Heart left ventricle (tissue), 16 donors: ENCODE measurements at regions of chr7 and their contacts with region 1.

Region 1: GRCh38 chr7:33757562-33758165 is 147.7 kb upstream of the BMPER start:
- DNase-seq: no peak
- ATAC-seq: no peak
- H3K4me3 ChIP-seq: no peak overlapping the region
- H3K27ac ChIP-seq: no peak overlapping the region
- H3K4me1 ChIP-seq: peaks cover 0 to 19% (median 7%) of the 10 kb centered on the region in 12 donors
- H3K27me3 ChIP-seq: no peaks in the 10 kb centered on the region
- CTCF ChIP-seq: peak; percentile 48 to 83 (median 71)
- POLR2A ChIP-seq: no peak

Region 2: GRCh38 chr7:33459340-33459751 is 298.3 kb before region 1 on chr7:
- intact Hi-C with region 1: loop called in 1 of 10 experiments (anchors 10 kb)
- DNase-seq: peak in 1 of 5 donors; percentile 22
- ATAC-seq: peak; percentile 58 to 86 (median 74)
- H3K4me3 ChIP-seq: peak overlapping the region in 1 of 12 donors; percentile 16
- H3K27ac ChIP-seq: no peak overlapping the region
- H3K4me1 ChIP-seq: no peaks in the 10 kb centered on the region
- H3K27me3 ChIP-seq: no peaks in the 10 kb centered on the region
- CTCF ChIP-seq: peak; percentile 23 to 55 (median 44)
- POLR2A ChIP-seq: no peak